PC-9 (cell line): ENCODE measurements at regions of chr15 and their contacts with region 1.

Region 1: DNA sequence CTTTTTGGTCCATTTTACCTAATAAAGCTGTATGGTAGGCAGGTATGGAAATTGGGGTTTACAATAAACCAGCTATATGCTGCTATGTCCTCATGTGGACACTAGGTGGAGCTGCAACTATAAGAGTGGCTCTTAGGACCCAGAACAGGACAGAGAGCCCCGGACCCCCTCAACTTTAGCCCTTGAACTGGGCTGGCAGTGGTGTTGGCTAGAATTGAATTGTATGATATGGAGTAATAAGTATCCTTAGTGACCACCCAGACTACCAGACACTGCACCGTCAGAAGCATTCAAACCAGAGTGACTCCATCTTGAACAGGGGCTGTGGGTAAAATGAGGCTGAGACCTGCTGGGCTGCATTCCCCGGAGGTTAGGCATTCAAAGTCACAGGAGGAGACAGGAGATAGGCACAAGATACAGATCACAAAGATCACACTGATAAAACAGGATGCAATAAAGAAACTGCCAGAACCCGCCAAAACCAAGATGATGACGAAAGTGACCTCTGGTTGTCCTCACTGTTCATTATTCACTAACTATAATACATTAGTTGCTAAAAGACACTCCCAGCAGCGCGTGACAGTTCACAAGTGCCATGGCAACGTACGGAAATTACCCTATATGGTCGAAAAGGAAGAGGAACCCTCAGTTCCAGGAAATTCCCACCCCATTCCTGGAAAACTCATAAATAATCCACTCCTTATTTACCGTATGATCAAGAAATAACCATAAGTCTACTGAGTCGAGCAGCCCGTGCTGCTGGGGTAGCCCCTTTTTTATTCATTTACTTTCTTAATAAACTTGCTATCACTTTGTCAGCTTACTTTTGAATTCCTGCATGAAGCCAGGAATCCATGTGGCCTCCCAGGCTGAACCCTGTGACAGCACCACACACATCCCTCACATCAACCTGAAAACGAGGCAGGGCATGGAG is 68.7 kb upstream of the BLM start:
- DNase-seq: peak; percentile 41 to 69
- H3K4me3 ChIP-seq: peak overlapping the region; percentile 21; the same call in 1 of the 2 replicates
- H3K27ac ChIP-seq: peak overlapping the region; percentile 41
- H3K4me1 ChIP-seq: peaks cover 24% of the 10 kb centered on the region
- H3K27me3 ChIP-seq: no peaks in the 10 kb centered on the region
- CTCF ChIP-seq: peak; percentile 97

Region 2: DNA sequence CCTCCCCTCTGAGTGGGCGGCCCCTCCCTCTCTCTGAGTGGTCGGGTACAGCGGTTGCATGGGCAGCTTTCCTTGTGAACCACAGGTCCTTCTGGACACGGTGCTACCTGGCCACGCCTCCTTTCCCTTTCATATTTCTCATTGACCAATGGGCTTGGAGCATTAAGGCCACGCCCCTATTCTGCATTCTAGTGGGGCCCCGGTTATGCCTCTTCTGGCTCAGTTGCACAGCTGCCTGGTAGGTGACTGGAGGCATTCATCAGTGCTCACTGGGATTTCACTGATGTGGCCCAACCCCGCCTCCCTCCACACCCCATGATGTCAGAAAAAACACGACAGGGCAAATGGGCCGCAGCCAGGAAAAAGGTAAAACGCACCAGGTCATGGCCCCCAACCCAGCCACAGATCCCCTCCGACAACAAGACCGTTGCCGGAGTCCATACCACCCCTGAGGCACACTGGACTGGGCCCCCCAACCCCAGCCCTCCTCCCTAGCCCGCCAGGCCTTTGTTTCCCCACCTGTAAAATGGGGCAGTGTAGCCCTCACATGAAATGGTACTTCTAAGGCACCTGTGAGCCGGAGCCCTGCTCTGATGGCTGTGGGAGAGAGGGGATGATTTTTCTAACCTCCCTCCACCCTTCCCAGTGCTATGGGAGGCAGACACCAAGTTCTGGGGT is 356.6 kb before region 1 on chr15:
- CTCF ChIA-PET with region 1: no interaction called
- POLR2A ChIA-PET with region 1: no interaction called
- intact Hi-C with region 1: loop called (anchors 1 kb)
- DNase-seq: peak; percentile 15 to 47
- H3K4me3 ChIP-seq: no peak overlapping the region
- H3K27ac ChIP-seq: no peak overlapping the region
- H3K4me1 ChIP-seq: peaks cover 4% of the 10 kb centered on the region; the same call in 1 of the 2 replicates
- H3K27me3 ChIP-seq: no peaks in the 10 kb centered on the region
- CTCF ChIP-seq: no peak

Region 3: GRCh38 chr15:90691982-90692773 is 43.8 kb after region 1 on chr15:
- CTCF ChIA-PET with region 1: interaction called, 5 read pairs
- POLR2A ChIA-PET with region 1: no interaction called
- intact Hi-C with region 1: loop called (anchors 1 kb)
- DNase-seq: no peak
- H3K4me3 ChIP-seq: no peak overlapping the region
- H3K27ac ChIP-seq: no peak overlapping the region
- H3K4me1 ChIP-seq: no peaks in the 10 kb centered on the region
- H3K27me3 ChIP-seq: no peaks in the 10 kb centered on the region
- CTCF ChIP-seq: no peak

Region 4: GRCh38 chr15:90774731-90775484 is 126.5 kb after region 1 on chr15:
- CTCF ChIA-PET with region 1: no interaction called
- POLR2A ChIA-PET with region 1: no interaction called
- intact Hi-C with region 1: loop called (anchors 5 kb)
- DNase-seq: peak; percentile 5 to 61
- H3K4me3 ChIP-seq: no peak overlapping the region
- H3K27ac ChIP-seq: no peak overlapping the region
- H3K4me1 ChIP-seq: peaks cover 7% of the 10 kb centered on the region
- H3K27me3 ChIP-seq: no peaks in the 10 kb centered on the region
- CTCF ChIP-seq: no peak

Region 5: GRCh38 chr15:90869601-90870353 is 221.4 kb after region 1 on chr15:
- CTCF ChIA-PET with region 1: no interaction called
- POLR2A ChIA-PET with region 1: no interaction called
- intact Hi-C with region 1: loop called (anchors 5 kb)
- DNase-seq: peak; percentile 83
- H3K4me3 ChIP-seq: peak overlapping the region; percentile 73; the same call in 1 of the 2 replicates
- H3K27ac ChIP-seq: peak overlapping the region; percentile 72
- H3K4me1 ChIP-seq: peaks cover 66% of the 10 kb centered on the region
- H3K27me3 ChIP-seq: no peaks in the 10 kb centered on the region
- CTCF ChIP-seq: no peak

Region 6: GRCh38 chr15:90886041-90886614 is 237.7 kb after region 1 on chr15:
- CTCF ChIA-PET with region 1: interaction called, 10 read pairs
- POLR2A ChIA-PET with region 1: no interaction called
- intact Hi-C with region 1: loop called (anchors 1 kb)
- DNase-seq: peak in 1 of 2 experiments; percentile 66
- H3K4me3 ChIP-seq: no peak overlapping the region
- H3K27ac ChIP-seq: no peak overlapping the region
- H3K4me1 ChIP-seq: no peaks in the 10 kb centered on the region
- H3K27me3 ChIP-seq: no peaks in the 10 kb centered on the region
- CTCF ChIP-seq: peak; percentile 98